B cell (primary cell): ENCODE measurements at regions of chr10 and their contacts with region 1.

Region 1: GRCh38 chr10:63866075-63866746 is 345.0 kb downstream of the REEP3 start:
- DNase-seq: peak; percentile 53
- ATAC-seq: peak; percentile 68
- H3K4me3 ChIP-seq: peak overlapping the region in 1 of 5 experiments; percentile 16
- H3K4me3 Mint-ChIP-seq: no peak overlapping the region
- H3K27ac ChIP-seq: no peak overlapping the region
- H3K27ac Mint-ChIP-seq: no peak overlapping the region
- H3K4me1 ChIP-seq: peaks cover 6 to 9% of the 10 kb centered on the region in 2 donors
- H3K4me1 Mint-ChIP-seq: peaks cover 11% of the 10 kb centered on the region
- H3K27me3 ChIP-seq: peaks cover 0 to 20% (median 15%) of the 10 kb centered on the region in 4 experiments
- H3K27me3 Mint-ChIP-seq: peaks cover 52% of the 10 kb centered on the region
- CTCF ChIP-seq: peak; percentile 96

Region 2: GRCh38 chr10:63878428-63878827 is 12.2 kb after region 1 on chr10:
- CTCF ChIA-PET with region 1: interaction called, 14 read pairs
- POLR2A ChIA-PET with region 1: no interaction called
- intact Hi-C with region 1: no loop called
- DNase-seq: no peak
- ATAC-seq: no peak
- H3K4me3 ChIP-seq: no peak overlapping the region
- H3K4me3 Mint-ChIP-seq: no peak overlapping the region
- H3K27ac ChIP-seq: no peak overlapping the region
- H3K27ac Mint-ChIP-seq: no peak overlapping the region
- H3K4me1 ChIP-seq: no peaks in the 10 kb centered on the region
- H3K4me1 Mint-ChIP-seq: no peaks in the 10 kb centered on the region
- H3K27me3 ChIP-seq: no peaks in the 10 kb centered on the region
- H3K27me3 Mint-ChIP-seq: peaks cover 6% of the 10 kb centered on the region
- CTCF ChIP-seq: no peak

Region 3: DNA sequence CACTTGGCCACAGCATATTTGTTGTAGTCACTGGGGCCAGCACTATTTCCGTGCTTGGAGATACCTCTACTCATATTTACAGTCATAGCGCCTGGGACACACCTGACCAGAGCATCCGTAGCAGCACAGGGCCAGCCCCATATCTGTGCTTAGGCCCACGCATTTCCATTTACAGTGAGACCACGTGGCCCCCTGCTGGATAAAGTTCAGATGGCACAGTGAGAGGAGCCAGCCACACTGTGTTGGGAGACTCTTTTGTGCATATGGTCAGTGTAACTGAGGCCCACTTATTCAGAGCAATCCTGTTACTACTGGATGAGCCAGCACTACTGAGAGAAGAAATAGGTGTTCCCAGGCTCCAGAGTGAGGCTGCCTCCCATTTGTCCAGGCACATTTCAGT is 110.3 kb after region 1 on chr10:
- CTCF ChIA-PET with region 1: interaction called, 3 read pairs
- POLR2A ChIA-PET with region 1: no interaction called
- intact Hi-C with region 1: loop called (anchors 5 kb)
- DNase-seq: peak; percentile 35
- ATAC-seq: peak; percentile 36
- H3K4me3 ChIP-seq: no peak overlapping the region
- H3K4me3 Mint-ChIP-seq: no peak overlapping the region
- H3K27ac ChIP-seq: no peak overlapping the region
- H3K27ac Mint-ChIP-seq: no peak overlapping the region
- H3K4me1 ChIP-seq: peaks cover 7 to 15% of the 10 kb centered on the region in 2 donors
- H3K4me1 Mint-ChIP-seq: peaks cover 13% of the 10 kb centered on the region
- H3K27me3 ChIP-seq: no peaks in the 10 kb centered on the region
- H3K27me3 Mint-ChIP-seq: no peaks in the 10 kb centered on the region
- CTCF ChIP-seq: peak; percentile 51